Gastrocnemius medialis (tissue), 4 donors: ENCODE measurements at regions of chr4 and their contacts with region 1.

Region 1: GRCh38 chr4:184474263-184475095 is at the start of gene IRF2:
- DNase-seq: peak; percentile 97
- ATAC-seq: peak; percentile 77
- H3K4me3 ChIP-seq: peak within 1 kb of the TSS; percentile 83 to 98 (median 92)
- H3K27ac ChIP-seq: peak within 1 kb of the TSS; percentile 96 to 100 (median 98)
- H3K4me1 ChIP-seq: peaks cover 51 to 54% of the 10 kb centered on the region in 2 donors
- H3K27me3 ChIP-seq: no peaks in the 10 kb centered on the region
- CTCF ChIP-seq: peak in 3 of 5 experiments; percentile 7 to 44 (median 36)
- POLR2A ChIP-seq: peak; percentile 96 to 97
- total RNA-seq, gene IRF2: 20.9 to 37.1 (median 32.8) TPM

Region 2: GRCh38 chr4:184196862-184197331 is 277.6 kb before region 1 on chr4:
- in situ Hi-C with region 1: no loop called
- intact Hi-C with region 1: no loop called
- DNase-seq: no peak
- ATAC-seq: no peak
- H3K4me3 ChIP-seq: no peak overlapping the region
- H3K27ac ChIP-seq: no peak overlapping the region
- H3K4me1 ChIP-seq: no peaks in the 10 kb centered on the region
- H3K27me3 ChIP-seq: no peaks in the 10 kb centered on the region
- CTCF ChIP-seq: no peak
- POLR2A ChIP-seq: no peak

Region 3: DNA sequence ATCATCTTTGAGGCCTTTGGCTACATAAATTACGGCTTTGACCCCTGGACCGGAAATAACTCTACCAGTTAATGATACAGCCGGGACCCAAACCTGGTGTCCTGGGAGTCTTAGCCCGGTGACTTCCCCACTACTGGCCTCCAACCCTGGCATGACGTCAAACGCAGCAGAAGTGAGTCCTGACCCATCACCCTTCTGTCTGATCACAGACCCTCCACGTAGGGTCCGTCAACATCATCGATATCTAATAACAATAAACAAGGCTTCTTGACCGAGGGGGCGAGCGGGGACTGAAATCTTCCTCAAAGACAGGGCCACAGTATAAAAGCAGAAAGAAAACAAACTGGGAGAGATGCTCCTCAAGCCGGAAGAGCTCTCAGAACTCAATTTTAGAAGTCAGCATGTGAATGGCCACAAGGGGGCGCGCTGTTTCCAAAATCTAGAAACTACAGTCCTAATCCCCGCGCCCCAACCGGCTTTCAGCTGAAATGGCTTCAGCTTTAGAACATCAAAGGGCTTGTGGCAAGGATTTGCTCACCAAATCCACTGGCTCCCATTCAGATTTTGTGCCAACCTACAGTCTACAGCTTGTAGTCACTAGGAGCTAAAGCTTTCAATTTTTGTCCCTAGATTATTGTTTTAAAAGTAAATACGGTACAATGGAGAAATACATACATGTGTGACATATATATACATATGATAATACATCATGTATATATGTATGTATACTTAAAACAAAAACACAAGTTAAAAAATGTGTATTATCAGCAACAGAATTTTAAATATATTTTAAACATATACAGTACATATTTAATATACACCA is 210.4 kb before region 1 on chr4:
- in situ Hi-C with region 1: no loop called
- intact Hi-C with region 1: loop called (anchors 5 kb)
- DNase-seq: peak; percentile 79 to 86
- ATAC-seq: peak; percentile 85 to 92
- H3K4me3 ChIP-seq: no peak overlapping the region
- H3K27ac ChIP-seq: no peak overlapping the region
- H3K4me1 ChIP-seq: no peaks in the 10 kb centered on the region
- H3K27me3 ChIP-seq: no peaks in the 10 kb centered on the region
- CTCF ChIP-seq: peak; percentile 81 to 94 (median 90)
- POLR2A ChIP-seq: no peak

Region 4: DNA sequence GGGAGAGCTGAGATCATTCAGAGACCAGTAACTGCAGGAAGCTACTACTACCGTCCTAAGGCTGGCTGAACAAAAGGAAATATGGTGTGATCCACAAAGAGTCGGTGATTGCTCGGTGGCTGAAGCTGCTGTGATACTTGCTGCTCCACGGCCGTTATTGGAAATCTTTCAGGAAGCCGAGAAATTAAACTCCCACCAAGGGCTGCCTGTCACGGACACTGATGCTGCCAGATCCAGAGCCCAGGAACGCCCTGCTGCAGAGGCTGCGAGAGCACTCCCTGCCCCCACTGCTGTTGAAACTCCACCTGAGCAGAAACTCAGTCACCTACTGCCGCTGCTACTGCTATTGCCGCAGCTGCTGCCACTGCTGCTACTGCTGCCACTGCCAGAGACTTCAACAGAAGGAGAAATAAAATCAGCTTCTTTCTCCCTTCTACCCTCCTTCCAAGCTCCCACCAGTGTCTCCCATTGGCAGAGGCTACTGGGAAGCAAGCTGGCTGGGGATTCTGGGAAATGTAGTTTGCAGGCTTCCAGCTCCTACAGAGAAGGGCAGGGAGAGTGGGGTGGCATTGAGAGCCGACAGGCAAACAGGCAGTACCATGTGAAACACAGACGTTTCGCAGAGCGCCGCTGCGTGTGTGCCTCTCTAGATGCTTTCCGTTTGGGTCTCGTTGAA is 130.8 kb before region 1 on chr4:
- in situ Hi-C with region 1: no loop called
- intact Hi-C with region 1: loop called (anchors 1 kb)
- DNase-seq: peak; percentile 77 to 84
- ATAC-seq: peak; percentile 64 to 69
- H3K4me3 ChIP-seq: peak overlapping the region; percentile 56 to 82 (median 67)
- H3K27ac ChIP-seq: peak overlapping the region; percentile 91 to 97 (median 92)
- H3K4me1 ChIP-seq: peaks cover 51 to 54% of the 10 kb centered on the region in 2 donors
- H3K27me3 ChIP-seq: no peaks in the 10 kb centered on the region
- CTCF ChIP-seq: no peak
- POLR2A ChIP-seq: peak; percentile 50 to 69

Region 5: GRCh38 chr4:184395971-184396391 is 78.5 kb before region 1 on chr4:
- in situ Hi-C with region 1: loop called in 1 of 4 experiments (anchors 10 kb)
- intact Hi-C with region 1: loop called (anchors 2 kb)
- DNase-seq: no peak
- ATAC-seq: peak in 1 of 2 donors; percentile 12
- H3K4me3 ChIP-seq: no peak overlapping the region
- H3K27ac ChIP-seq: peak overlapping the region; percentile 71 to 86 (median 82)
- H3K4me1 ChIP-seq: peaks cover 46 to 55% of the 10 kb centered on the region in 2 donors
- H3K27me3 ChIP-seq: no peaks in the 10 kb centered on the region
- CTCF ChIP-seq: no peak
- POLR2A ChIP-seq: no peak

Region 6: DNA sequence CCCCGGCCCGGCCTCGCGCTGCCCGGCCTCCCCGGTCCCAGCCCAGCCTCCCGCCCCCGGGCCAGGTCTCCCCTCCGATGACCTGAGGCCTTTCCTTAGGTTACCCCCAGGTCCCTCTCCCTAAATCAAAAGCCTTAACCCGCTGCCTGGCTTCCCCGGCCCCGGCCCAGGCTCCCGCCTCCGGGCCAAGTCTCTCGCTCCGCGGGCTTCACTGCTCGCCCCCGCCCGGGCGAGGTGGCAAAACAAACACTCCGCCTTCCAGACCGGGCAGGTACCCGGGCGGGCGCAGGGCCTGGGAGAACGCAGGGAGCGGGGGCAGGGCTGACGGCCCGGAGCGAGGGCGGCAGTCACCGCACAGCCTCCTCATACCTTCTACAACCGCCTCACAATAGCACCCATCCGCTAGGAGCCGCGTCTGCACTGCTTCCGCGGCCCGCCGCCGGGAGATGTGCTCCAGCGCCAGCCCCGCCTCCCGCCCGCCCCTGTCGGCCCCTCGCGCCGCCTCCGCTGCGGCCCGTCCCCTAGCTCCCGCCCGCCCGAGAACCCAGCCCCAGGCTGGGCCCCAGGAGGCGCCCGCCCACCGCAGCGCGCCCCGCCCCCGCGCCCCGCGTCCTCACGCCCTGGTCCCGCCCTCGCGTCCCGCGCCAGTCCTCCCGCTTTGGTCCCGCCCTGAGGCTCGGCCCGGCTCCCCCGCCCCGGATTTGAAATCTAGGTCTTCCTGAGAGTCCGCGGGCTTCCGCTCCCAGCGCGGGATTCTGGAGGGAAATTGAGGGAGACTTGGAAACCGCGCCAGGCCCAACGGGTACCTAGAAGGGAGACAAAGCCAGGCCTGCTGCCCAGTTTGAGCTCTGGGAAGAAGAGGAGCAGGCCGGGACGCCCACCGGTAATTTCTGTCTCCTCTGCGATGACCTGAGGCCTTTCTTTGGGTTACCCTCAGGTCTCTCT is 174.8 kb after region 1 on chr4 and contains the starts of genes CASP3 and PRIMPOL:
- in situ Hi-C with region 1: no loop called
- intact Hi-C with region 1: loop called (anchors 2 kb)
- DNase-seq: peak; percentile 93 to 95
- ATAC-seq: peak; percentile 80 to 86
- H3K4me3 ChIP-seq: peak within 1 kb of the TSS; percentile 66 to 98 (median 82)
- H3K27ac ChIP-seq: peak within 1 kb of the TSS; percentile 89 to 100 (median 98)
- H3K4me1 ChIP-seq: peaks cover 46 to 54% of the 10 kb centered on the region in 2 donors
- H3K27me3 ChIP-seq: no peaks in the 10 kb centered on the region
- CTCF ChIP-seq: peak in 2 of 5 experiments; percentile 29 to 45
- POLR2A ChIP-seq: peak; percentile 86 to 92
- total RNA-seq, gene CASP3: 16.9 to 25.5 (median 20.8) TPM
- total RNA-seq, gene PRIMPOL: 5.9 to 11.1 (median 10.7) TPM